Activated T-helper 2 cell treated with anti-CD3 and anti-CD28 coated beads, Interferon-gamma antibody, Interleukin-2, Interleukin-4, amounts not matched to agents 10 μg/mL and 5 μg/mL and 100 μg/mL, durations not matched to agents 14 hours and 24 hours and 36 hours (primary cell): ENCODE measurements at regions of chr2 and their contacts with region 1.

Region 1: GRCh38 chr2:73233154-73233931 is at the start of gene PRADC1:
- DNase-seq: peak; percentile 96
- H3K4me3 Mint-ChIP-seq: peak within 1 kb of the TSS; percentile 96
- H3K27ac Mint-ChIP-seq: peak within 1 kb of the TSS; percentile 92
- H3K4me1 Mint-ChIP-seq: peaks cover 31% of the 10 kb centered on the region
- H3K27me3 Mint-ChIP-seq: no peaks in the 10 kb centered on the region
- total RNA-seq, gene PRADC1: 10.5 and 11.4 TPM in 2 replicates

Region 2: DNA sequence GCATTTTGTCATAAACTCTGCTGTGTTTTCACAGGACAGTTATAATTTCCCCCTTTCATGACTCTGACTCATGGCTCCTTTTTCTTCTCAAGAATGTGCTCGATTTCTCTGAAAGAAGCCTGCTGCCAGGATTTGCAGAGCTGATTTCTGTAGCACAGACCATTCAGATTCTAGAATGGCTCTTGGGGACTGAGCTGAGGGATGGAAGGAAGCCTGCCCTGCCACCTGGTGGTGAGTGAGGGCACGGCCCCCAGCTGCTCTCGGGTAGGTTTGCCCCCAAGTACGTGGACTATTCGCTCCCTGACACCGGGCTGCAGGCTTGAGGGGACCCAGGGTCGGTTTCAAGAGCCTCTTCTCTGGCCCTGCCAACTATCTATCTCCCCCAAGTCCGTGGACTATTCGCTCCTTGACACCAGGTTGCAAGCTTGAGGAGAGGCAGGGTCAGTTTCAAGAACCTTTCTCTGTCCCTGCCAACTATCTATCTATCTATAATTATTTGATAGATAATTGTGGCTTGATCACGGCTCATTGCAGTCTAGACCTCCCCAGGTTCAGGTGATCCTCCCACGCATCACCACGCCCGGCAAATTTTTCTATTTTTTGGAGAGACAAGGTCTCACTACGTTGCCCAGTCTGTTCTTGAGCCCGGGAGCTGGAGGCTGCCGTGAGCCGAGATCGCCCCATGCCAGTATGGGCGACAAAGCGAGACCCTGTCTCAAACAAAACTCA is 20.7 kb before region 1 on chr2:
- intact Hi-C with region 1: loop called (anchors 1 kb)
- DNase-seq: peak; percentile 64
- H3K4me3 Mint-ChIP-seq: no peak overlapping the region
- H3K27ac Mint-ChIP-seq: no peak overlapping the region
- H3K4me1 Mint-ChIP-seq: peaks cover 26% of the 10 kb centered on the region
- H3K27me3 Mint-ChIP-seq: peaks cover 17% of the 10 kb centered on the region

Region 3: DNA sequence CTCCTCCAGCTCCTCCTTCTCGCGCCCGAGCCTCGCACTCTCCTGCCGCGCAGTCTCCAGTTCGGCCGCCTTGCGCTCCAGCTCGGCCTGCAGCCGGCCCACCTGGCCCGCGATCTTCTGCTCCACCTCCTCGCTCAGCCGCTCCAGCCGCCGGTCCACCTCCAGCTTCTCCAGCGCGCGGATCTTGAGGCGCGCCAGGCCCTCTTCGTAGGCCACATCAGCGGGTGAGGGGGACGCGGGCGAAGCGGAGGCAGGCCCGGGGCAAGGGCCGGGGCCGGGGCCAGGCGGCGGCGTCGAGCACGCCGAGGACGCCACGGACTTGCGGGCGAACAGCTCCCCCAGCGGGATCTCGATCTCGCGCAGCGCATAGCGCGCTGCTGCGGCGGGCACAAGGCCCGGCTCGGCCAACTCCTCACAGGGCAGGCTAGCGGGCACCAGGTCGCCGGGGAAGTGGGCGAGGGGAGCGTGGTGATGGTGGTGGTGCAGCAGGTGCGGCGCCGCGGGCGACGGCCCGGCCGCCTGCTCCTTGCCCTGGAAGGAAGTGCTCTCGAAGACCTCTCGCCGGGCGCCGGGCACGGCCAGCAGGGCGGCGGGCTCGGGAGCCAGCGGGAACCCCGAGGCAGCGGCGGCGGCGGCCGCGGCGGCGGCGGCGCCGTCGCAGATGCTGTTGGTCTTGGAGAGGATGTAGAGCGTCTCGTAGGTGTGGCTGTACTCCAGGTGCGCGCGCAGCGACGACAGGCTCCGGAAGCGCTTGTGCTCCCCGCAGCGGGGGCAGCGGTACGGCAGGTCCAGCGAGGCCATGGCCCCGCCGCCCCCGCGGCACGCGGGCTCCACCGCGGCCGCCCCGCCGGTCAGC is 35.7 kb after region 1 on chr2:
- intact Hi-C with region 1: loop called (anchors 2 kb)
- DNase-seq: peak; percentile 72
- H3K4me3 Mint-ChIP-seq: no peak overlapping the region
- H3K27ac Mint-ChIP-seq: no peak overlapping the region
- H3K4me1 Mint-ChIP-seq: peaks cover 11% of the 10 kb centered on the region
- H3K27me3 Mint-ChIP-seq: no peaks in the 10 kb centered on the region

Region 4: GRCh38 chr2:73284296-73285158 is 51.2 kb after region 1 on chr2 and contains the start of gene FBXO41:
- intact Hi-C with region 1: loop called (anchors 2 kb)
- DNase-seq: peak; percentile 68
- H3K4me3 Mint-ChIP-seq: peak within 1 kb of the TSS; percentile 78
- H3K27ac Mint-ChIP-seq: peak within 1 kb of the TSS; percentile 53
- H3K4me1 Mint-ChIP-seq: peaks cover 13% of the 10 kb centered on the region
- H3K27me3 Mint-ChIP-seq: peaks cover 26% of the 10 kb centered on the region
- total RNA-seq, gene FBXO41: 25.3 and 25.7 TPM in 2 replicates

Region 5: GRCh38 chr2:73293534-73294171 is 60.3 kb after region 1 on chr2 and contains the start of gene EGR4:
- intact Hi-C with region 1: loop called (anchors 1 kb)
- DNase-seq: peak; percentile 87
- H3K4me3 Mint-ChIP-seq: peak within 1 kb of the TSS; percentile 69
- H3K27ac Mint-ChIP-seq: no peak within 1 kb of the TSS
- H3K4me1 Mint-ChIP-seq: peaks cover 5% of the 10 kb centered on the region
- H3K27me3 Mint-ChIP-seq: peaks cover 67% of the 10 kb centered on the region
- total RNA-seq, gene EGR4: 0.46 and 0.53 TPM in 2 replicates

Region 6: GRCh38 chr2:73385595-73386341 is 152.4 kb after region 1 on chr2 and contains the start of gene ALMS1:
- intact Hi-C with region 1: loop called (anchors 1 kb)
- DNase-seq: peak; percentile 89
- H3K4me3 Mint-ChIP-seq: peak within 1 kb of the TSS; percentile 89
- H3K27ac Mint-ChIP-seq: peak within 1 kb of the TSS; percentile 90
- H3K4me1 Mint-ChIP-seq: peaks cover 27% of the 10 kb centered on the region
- H3K27me3 Mint-ChIP-seq: peaks cover 9% of the 10 kb centered on the region
- total RNA-seq, gene ALMS1: 19.0 and 21.6 TPM in 2 replicates

Region 7: DNA sequence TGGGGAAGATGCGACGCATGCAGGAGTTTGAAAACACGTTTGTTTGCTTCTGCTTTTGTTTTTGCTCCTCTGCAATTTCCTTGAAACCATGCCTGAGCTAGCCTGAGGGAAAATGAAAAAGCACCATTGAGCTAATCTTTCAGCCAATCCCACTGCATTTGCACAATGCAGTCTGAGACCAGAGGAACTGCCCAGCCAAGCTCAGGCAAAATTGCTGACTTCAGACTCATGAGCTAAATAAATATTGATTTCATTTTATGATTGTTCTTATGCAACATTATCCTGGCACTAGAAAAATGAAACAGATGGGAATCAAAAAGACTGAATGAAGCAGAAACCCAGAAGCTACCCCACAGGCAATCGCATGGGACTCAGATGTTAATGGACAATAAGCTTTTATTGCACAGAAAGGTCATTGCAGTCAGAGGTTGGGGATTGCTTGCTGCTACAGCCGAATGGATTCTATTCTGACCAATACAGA is 466.8 kb after region 1 on chr2:
- intact Hi-C with region 1: no loop called
- DNase-seq: no peak
- H3K4me3 Mint-ChIP-seq: no peak overlapping the region
- H3K27ac Mint-ChIP-seq: no peak overlapping the region
- H3K4me1 Mint-ChIP-seq: no peaks in the 10 kb centered on the region
- H3K27me3 Mint-ChIP-seq: peaks cover 1% of the 10 kb centered on the region

Region 8: GRCh38 chr2:73736855-73737779 is 503.8 kb after region 1 on chr2 and contains the start of gene TPRKB:
- intact Hi-C with region 1: loop called (anchors 2 kb)
- DNase-seq: peak; percentile 95
- H3K4me3 Mint-ChIP-seq: peak within 1 kb of the TSS; percentile 97
- H3K27ac Mint-ChIP-seq: peak within 1 kb of the TSS; percentile 87
- H3K4me1 Mint-ChIP-seq: peaks cover 8% of the 10 kb centered on the region
- H3K27me3 Mint-ChIP-seq: no peaks in the 10 kb centered on the region
- total RNA-seq, gene TPRKB: 31.9 and 36.0 TPM in 2 replicates